ENCODE measurements at regions of chr2 and their contacts with region 1.

Region 1: DNA sequence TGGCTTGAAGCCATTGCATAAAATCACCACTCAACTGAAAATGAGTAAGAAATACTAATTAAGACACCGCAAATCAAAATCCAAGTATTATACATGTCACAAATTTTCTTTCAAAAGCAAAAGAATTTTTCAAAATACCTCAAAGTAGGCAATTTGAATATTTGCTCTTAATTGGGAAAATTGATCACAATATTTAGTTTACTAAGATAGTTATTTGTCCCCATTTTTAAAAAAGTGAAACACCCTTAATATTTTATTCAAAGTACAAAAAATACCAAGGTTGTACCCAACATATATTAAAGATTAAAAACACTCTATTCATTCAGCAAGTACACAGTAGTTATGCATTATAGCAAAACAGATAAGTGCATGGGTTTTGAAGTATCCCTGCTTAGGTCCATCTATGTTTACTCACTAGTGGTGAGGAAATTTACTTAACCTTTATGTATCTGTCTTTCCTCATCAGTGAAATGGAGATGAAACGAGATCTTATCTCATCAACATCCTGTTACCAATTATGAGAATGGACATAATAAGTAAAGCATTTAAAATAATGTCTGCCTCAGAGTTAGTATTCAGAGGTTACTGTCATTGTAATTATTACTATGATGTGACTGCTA is 35.1 kb downstream of the VPS54 start:
- DNase-seq: peak; percentile 98
- ATAC-seq: peak; percentile 79
- H3K4me3 ChIP-seq: peak overlapping the region in 2 of 3 experiments; percentile 1 to 27; a peak in 1 of 6 replicates
- H3K27ac ChIP-seq: peak overlapping the region; percentile 81
- H3K4me1 ChIP-seq: peaks cover 90% of the 10 kb centered on the region
- H3K27me3 ChIP-seq: no peaks in the 10 kb centered on the region
- CTCF ChIP-seq: no peak
- EP300 ChIP-seq: peak; percentile 80 to 100; a peak in 3 of 4 replicates
- POLR2A ChIP-seq: no peak
- RAD21 ChIP-seq: no peak

Region 2: GRCh38 chr2:63861220-63861822 is 122.8 kb before region 1 on chr2:
- CTCF ChIA-PET with region 1: no interaction called
- POLR2A ChIA-PET with region 1: no interaction called
- in situ Hi-C with region 1: no loop called
- intact Hi-C with region 1: no loop called
- DNase-seq: peak; percentile 54
- ATAC-seq: peak; percentile 60
- H3K4me3 ChIP-seq: no peak overlapping the region
- H3K27ac ChIP-seq: no peak overlapping the region
- H3K4me1 ChIP-seq: peaks cover 23% of the 10 kb centered on the region
- H3K27me3 ChIP-seq: no peaks in the 10 kb centered on the region
- CTCF ChIP-seq: peak; percentile 55
- EP300 ChIP-seq: no peak
- POLR2A ChIP-seq: no peak
- RAD21 ChIP-seq: peak; percentile 81

Region 3: DNA sequence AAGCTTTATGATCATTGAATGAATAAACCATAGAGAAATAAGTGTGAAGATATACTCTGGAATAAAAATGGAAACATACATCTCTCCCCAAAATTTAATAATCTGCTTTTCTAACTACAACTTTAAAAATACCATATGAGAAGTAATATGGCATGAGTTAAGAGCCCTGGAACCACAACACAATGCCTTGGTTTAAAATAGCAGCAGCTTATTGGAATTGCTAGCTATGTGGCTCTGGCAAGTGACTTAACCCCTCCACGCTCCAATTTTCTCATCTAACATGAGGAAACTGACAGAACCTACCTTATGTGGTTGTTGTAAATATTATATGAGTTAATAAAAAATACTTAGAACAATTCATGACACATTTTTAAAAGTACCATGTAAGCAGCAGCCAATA is 41.3 kb before region 1 on chr2:
- CTCF ChIA-PET with region 1: no interaction called
- POLR2A ChIA-PET with region 1: interaction called, 3 read pairs
- in situ Hi-C with region 1: no loop called
- intact Hi-C with region 1: loop called (anchors 5 kb)
- DNase-seq: no peak
- ATAC-seq: no peak
- H3K4me3 ChIP-seq: no peak overlapping the region
- H3K27ac ChIP-seq: no peak overlapping the region
- H3K4me1 ChIP-seq: no peaks in the 10 kb centered on the region
- H3K27me3 ChIP-seq: no peaks in the 10 kb centered on the region
- CTCF ChIP-seq: no peak
- EP300 ChIP-seq: no peak
- POLR2A ChIP-seq: no peak
- RAD21 ChIP-seq: no peak

Region 4: DNA sequence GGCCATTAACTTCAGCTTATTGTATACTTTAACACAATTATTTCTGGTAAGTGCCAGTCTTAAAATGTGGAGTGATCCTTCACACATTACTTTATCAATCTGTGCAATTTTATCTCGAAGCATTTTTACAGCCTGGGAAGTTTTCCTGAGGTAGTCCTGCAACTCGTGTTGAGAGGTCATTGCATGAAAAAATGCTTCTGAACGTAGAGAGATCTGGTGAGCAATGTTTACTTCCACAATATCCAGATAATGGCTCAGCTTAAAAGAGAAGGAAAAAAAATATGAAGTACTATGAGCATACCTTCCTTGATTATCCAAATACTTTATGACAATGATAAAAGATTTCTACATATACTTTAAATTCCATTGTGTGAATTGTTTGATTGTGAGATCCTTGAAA is 21.9 kb before region 1 on chr2:
- CTCF ChIA-PET with region 1: no interaction called
- POLR2A ChIA-PET with region 1: no interaction called
- in situ Hi-C with region 1: no loop called
- intact Hi-C with region 1: no loop called
- DNase-seq: no peak
- ATAC-seq: no peak
- H3K4me3 ChIP-seq: no peak overlapping the region
- H3K27ac ChIP-seq: no peak overlapping the region
- H3K4me1 ChIP-seq: no peaks in the 10 kb centered on the region
- H3K27me3 ChIP-seq: no peaks in the 10 kb centered on the region
- CTCF ChIP-seq: no peak
- EP300 ChIP-seq: no peak
- POLR2A ChIP-seq: no peak
- RAD21 ChIP-seq: no peak

Region 5: DNA sequence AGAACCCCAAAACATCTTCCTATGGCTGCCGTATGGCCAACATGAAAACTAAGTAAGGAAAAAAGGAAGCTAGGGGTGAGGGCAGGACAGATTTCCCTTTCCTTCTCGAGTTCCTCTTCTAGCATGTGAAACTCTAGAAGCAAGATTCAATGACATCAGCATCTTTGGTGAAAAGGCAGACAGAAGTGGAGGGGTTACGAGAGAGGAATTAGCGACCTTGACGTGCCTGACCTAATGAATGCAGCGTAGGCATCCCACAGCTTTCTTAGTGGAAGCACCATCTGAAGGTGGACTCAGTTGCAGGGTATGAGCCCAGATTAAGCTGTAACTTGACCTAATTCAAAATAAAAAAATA is 208.0 kb after region 1 on chr2:
- CTCF ChIA-PET with region 1: no interaction called
- POLR2A ChIA-PET with region 1: no interaction called
- in situ Hi-C with region 1: no loop called
- intact Hi-C with region 1: no loop called
- DNase-seq: no peak
- ATAC-seq: no peak
- H3K4me3 ChIP-seq: no peak overlapping the region
- H3K27ac ChIP-seq: no peak overlapping the region
- H3K4me1 ChIP-seq: peaks cover 3% of the 10 kb centered on the region; the same call in 1 of the 2 replicates
- H3K27me3 ChIP-seq: peaks cover 0 to 10% of the 10 kb centered on the region in 2 experiments; a peak in 1 of 5 replicates
- CTCF ChIP-seq: no peak
- EP300 ChIP-seq: no peak
- POLR2A ChIP-seq: no peak
- RAD21 ChIP-seq: no peak